Activated T-helper 1 cell treated with anti-CD3 and anti-CD28 coated beads, Interleukin-12 subunit alpha, Interleukin-12 subunit beta, Interleukin-2, Interleukin-4 antibody, amounts not matched to agents 30 ng/mL and 10 ng/mL and 1 ng/mL, durations not matched to agents 14 hours and 24 hours and 36 hours (primary cell): ENCODE measurements at regions of chr1 and their contacts with region 1.

Region 1: GRCh38 chr1:10694633-10695627 is 101.5 kb downstream of the CASZ1 start:
- DNase-seq: peak; percentile 74
- H3K4me3 Mint-ChIP-seq: peak overlapping the region; percentile 81
- H3K27ac Mint-ChIP-seq: peak overlapping the region; percentile 81
- H3K4me1 Mint-ChIP-seq: peaks cover 24% of the 10 kb centered on the region
- H3K27me3 Mint-ChIP-seq: peaks cover 23% of the 10 kb centered on the region

Region 2: GRCh38 chr1:10731041-10731440 is 36.1 kb after region 1 on chr1:
- intact Hi-C with region 1: loop called (anchors 1 kb)
- DNase-seq: no peak
- H3K4me3 Mint-ChIP-seq: no peak overlapping the region
- H3K27ac Mint-ChIP-seq: no peak overlapping the region
- H3K4me1 Mint-ChIP-seq: peaks cover 6% of the 10 kb centered on the region
- H3K27me3 Mint-ChIP-seq: peaks cover 13% of the 10 kb centered on the region

Region 3: DNA sequence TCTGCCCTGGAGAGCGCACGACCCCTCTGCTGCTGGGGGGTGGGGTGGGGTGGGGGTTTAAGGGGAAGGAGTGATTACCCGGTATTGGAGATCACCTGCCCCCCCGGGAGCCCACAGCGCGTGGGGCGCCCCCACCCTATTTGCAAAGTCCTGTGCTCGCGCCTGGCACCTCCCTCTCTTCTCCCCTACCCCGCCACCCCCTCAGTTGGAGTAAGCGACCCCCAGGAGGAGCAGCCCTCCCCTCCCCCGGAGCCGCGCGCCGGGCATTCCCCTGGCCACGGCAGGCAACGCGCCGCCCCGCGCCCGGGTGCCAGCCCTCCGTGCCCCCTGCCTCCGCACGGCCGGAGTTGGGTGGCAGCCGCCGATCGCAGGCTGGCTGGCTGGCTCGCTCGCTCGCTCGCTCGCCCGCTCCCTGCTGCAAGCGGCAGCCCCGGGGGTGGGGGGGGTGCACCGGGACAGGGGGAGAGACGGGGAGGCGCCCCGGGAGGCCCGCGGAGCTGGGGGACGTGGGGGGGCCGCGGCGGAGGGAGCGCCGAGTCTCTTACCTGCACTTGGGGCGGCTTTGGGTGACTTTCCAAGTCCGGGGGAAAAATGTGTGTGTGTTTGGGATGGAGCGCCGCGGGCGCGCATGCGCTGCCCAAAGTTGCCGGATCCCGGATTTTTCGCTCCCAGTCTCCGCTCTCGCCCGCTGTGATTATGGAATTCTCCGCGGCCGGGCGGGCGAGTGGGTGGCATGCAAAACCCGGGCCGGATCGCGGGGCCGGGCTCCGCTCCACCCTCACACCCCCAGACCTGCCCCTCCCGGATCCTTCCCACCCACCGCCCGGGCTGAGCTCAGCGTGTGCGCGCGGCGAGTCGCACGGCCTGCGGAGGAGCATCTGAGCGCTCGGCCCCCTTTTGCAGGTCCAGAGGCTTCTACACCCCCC is 101.4 kb after region 1 on chr1 and contains the start of gene CASZ1:
- intact Hi-C with region 1: loop called (anchors 5 kb)
- DNase-seq: no peak
- H3K4me3 Mint-ChIP-seq: no peak within 1 kb of the TSS
- H3K27ac Mint-ChIP-seq: no peak within 1 kb of the TSS
- H3K4me1 Mint-ChIP-seq: peaks cover 5% of the 10 kb centered on the region
- H3K27me3 Mint-ChIP-seq: peaks cover 60% of the 10 kb centered on the region
- total RNA-seq, gene CASZ1: 8.0 and 11.7 TPM in 2 replicates

Region 4: DNA sequence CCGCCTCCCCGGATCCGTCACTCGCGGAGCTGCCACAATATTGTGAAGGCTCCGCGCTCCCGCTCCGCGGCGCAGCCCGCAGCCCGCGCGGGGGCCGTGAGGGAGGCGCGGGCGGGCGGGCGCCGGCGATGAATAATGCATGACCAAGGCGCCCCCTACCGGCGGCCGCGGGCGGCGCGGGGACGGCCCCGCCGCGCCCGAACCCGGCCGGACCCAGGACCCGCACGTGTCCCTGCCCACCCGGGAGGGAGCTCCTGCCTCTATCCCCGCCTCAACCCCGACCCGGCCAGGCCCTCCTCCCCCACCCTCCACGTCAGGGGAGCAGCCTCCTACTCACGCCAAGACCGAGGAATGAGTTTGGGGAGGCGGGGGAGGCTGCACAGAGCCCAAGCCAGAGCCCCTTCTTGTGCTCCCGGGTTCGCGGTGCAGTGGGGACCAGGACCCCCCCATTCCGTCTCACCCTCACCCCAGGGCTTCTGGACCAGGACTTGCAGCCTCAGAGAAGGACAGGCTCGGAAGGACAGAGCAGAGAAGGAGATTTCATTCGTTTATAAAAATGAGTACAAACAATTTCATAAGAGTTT is 172.3 kb after region 1 on chr1:
- intact Hi-C with region 1: loop called (anchors 1 kb)
- DNase-seq: peak; percentile 48
- H3K4me3 Mint-ChIP-seq: peak overlapping the region; percentile 35
- H3K27ac Mint-ChIP-seq: no peak overlapping the region
- H3K4me1 Mint-ChIP-seq: peaks cover 5% of the 10 kb centered on the region
- H3K27me3 Mint-ChIP-seq: peaks cover 67% of the 10 kb centered on the region

Region 5: DNA sequence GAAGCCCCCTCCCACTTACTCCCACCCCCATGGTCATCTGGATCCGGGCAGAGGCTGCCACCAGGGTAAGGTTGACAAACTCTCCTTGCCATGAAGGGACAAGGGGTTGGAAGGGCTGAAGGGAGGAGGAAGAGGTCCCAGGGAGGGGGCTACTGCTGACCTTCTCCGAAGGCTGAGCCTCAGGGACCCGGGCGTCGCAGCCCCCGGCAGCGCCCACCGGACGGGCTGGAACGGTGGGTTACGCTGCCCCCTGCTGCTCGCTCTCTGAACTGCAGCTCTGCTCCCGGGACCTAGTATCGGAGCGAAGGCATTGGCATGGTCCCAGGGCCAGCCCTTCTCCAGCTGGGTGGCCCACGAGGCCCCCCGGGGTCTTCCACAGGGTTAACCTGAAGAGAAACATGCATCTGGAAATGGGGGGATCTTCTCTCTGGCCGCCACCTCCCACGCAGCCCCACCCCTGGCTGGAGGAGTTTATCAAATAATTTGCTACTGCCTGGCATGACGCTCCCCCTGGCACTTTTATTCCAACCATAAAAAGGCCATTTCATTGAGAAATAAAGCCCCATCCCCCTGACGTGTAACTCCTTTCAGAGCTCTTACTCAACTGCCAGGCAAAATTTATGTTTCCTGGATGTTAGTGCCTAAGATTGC is 247.1 kb after region 1 on chr1:
- intact Hi-C with region 1: loop called (anchors 2 kb)
- DNase-seq: peak; percentile 42
- H3K4me3 Mint-ChIP-seq: no peak overlapping the region
- H3K27ac Mint-ChIP-seq: no peak overlapping the region
- H3K4me1 Mint-ChIP-seq: peaks cover 31% of the 10 kb centered on the region
- H3K27me3 Mint-ChIP-seq: peaks cover 56% of the 10 kb centered on the region

Region 6: GRCh38 chr1:10960411-10961299 is 265.7 kb after region 1 on chr1:
- intact Hi-C with region 1: loop called (anchors 5 kb)
- DNase-seq: peak; percentile 66
- H3K4me3 Mint-ChIP-seq: no peak overlapping the region
- H3K27ac Mint-ChIP-seq: no peak overlapping the region
- H3K4me1 Mint-ChIP-seq: peaks cover 14% of the 10 kb centered on the region
- H3K27me3 Mint-ChIP-seq: peaks cover 26% of the 10 kb centered on the region